ENCODE measurements at regions of chr16 and their contacts with region 1.

Region 1: GRCh38 chr16:30091474-30092372 is at the start of gene TBX6:
- DNase-seq: peak; percentile 95 to 97
- ATAC-seq: peak; percentile 89 to 91 (median 90)
- H3K4me3 ChIP-seq: peak within 1 kb of the TSS; percentile 64
- H3K27ac ChIP-seq: peak within 1 kb of the TSS; percentile 97
- H3K4me1 ChIP-seq: peaks cover 34% of the 10 kb centered on the region
- H3K27me3 ChIP-seq: no peaks in the 10 kb centered on the region
- CTCF ChIP-seq: peak; percentile 78
- total RNA-seq, gene TBX6: 0.32 to 1.0 (median 0.51) TPM

Region 2: DNA sequence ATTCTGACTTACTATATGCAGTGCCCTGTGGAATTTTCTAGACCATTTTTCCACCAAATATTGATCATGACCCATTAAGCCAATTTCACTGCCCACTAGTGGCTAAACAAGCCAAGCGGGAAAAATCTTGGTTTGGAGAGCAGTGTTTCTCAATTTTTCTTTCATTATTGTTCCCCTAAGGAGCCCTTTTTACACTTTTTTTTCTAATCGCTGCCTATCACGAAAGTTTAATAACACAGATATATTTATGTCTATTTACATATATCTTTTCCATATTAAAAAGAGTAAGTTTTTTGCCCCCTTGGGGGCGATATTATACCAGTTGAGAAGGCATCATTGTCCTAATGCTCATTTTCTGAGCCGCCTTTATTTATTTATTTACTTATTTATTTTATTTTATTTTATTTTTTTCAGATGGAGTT is 49.9 kb before region 1 on chr16:
- intact Hi-C with region 1: loop called in 1 of 2 experiments (anchors 5 kb)
- DNase-seq: no peak
- ATAC-seq: peak in 2 of 4 donors; percentile 45 to 75
- H3K4me3 ChIP-seq: no peak overlapping the region
- H3K27ac ChIP-seq: no peak overlapping the region
- H3K4me1 ChIP-seq: no peaks in the 10 kb centered on the region
- H3K27me3 ChIP-seq: no peaks in the 10 kb centered on the region
- CTCF ChIP-seq: peak; percentile 59

Region 3: GRCh38 chr16:30075507-30076275 is 16.0 kb before region 1 on chr16 and contains the start of gene PPP4C:
- intact Hi-C with region 1: loop called in 1 of 2 experiments (anchors 1 kb)
- DNase-seq: peak; percentile 94 to 95
- ATAC-seq: peak; percentile 86 to 89 (median 88)
- H3K4me3 ChIP-seq: peak within 1 kb of the TSS; percentile 76
- H3K27ac ChIP-seq: peak within 1 kb of the TSS; percentile 94
- H3K4me1 ChIP-seq: peaks cover 24% of the 10 kb centered on the region
- H3K27me3 ChIP-seq: no peaks in the 10 kb centered on the region
- CTCF ChIP-seq: no peak
- total RNA-seq, gene PPP4C: 38.1 to 64.5 (median 58.5) TPM

Region 4: GRCh38 chr16:30122604-30123160 is 31.0 kb after region 1 on chr16:
- intact Hi-C with region 1: loop called in 1 of 2 experiments (anchors 2 kb)
- DNase-seq: peak in 1 of 2 donors; percentile 25
- ATAC-seq: peak; percentile 5 to 38 (median 9)
- H3K4me3 ChIP-seq: peak overlapping the region; percentile 86
- H3K27ac ChIP-seq: peak overlapping the region; percentile 97
- H3K4me1 ChIP-seq: peaks cover 19% of the 10 kb centered on the region
- H3K27me3 ChIP-seq: no peaks in the 10 kb centered on the region
- CTCF ChIP-seq: no peak

Region 5: DNA sequence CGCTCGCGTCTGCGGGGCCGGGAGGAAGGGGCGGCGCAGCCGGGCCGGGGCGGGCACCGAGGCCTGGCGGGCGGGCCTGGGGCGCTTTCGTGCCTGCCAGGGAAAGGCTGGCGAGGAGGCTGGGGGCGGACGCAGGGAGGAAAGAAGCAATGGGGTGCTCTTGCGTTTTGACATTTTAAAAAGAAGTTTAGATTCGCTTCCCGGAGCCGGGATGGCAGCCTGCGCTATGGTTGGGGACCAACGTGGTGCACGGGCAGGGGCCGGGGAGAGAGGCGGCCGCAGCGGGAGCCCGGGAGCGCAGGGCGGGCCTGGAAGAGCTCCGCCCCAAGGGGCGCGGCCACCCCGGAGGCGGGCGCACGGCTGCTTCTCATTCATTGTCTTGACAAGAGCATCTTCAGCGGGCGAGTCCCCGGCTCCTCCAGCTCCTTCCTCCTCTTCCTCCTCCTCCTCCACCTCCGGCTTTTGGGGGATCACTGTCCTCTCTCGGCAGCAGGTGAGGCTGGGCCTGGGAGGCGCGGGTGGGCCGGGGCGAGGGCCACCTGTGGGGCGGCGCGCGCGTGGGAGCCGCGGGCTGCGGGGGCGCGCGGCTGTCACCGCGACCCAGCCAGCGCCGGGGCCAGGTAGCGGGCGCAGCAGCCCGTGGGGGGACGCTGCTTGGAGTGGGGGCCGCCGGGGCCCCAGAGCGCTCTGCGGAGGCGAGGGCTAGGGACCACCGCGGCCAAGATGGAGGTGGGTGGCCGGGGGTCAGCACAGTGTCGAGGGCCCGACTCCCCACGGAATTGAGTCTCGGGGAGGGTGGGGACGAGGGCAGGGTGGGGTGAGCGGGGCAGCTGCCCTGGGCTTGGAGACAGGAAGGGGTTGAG is 91.7 kb after region 1 on chr16 and contains the start of gene CORO1A:
- intact Hi-C with region 1: loop called in 1 of 2 experiments (anchors 5 kb)
- DNase-seq: peak; percentile 83 to 90
- ATAC-seq: peak; percentile 75 to 89 (median 82)
- H3K4me3 ChIP-seq: peak within 1 kb of the TSS; percentile 79
- H3K27ac ChIP-seq: peak within 1 kb of the TSS; percentile 41
- H3K4me1 ChIP-seq: peaks cover 4% of the 10 kb centered on the region
- H3K27me3 ChIP-seq: no peaks in the 10 kb centered on the region
- CTCF ChIP-seq: no peak
- total RNA-seq, gene CORO1A: 4.0 to 6.8 (median 6.3) TPM

Region 6: DNA sequence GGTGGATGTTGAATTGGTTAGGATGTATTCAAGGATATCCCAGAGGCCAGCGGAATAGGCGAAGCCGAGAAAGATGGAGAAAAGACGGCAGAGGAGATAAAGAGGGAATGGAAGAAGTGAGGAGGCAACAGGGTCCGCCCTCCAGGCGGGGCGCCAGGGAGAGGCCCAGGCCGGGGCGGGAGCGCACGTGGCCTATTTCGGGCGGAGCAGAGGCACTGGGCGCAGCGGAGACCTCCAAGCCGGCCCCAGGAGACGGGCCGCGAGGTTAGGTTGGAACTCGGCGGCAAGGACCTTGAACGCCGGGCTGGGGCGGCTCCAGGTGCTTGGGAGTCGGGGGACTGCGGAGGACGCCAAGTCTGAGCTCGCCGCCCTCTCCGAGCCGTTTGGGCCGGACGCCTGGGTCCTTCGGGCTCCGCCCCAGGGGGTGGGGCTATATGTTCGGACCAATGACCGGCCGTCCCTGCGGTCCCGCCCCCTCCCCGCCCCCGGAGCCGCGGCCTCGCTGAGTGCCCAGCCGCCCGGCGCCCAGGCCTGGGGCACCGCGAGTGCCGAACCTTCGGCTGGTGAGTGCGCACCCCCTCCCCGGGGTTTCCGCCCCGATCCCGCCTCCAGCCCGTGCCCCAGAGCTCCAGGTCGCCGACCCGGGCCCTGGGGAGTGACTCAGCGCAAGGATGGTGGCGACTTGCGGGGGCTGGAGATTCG is 315.5 kb after region 1 on chr16 and contains the start of gene ZNF771:
- intact Hi-C with region 1: loop called in 1 of 2 experiments (anchors 10 kb)
- DNase-seq: peak; percentile 96 to 97
- ATAC-seq: peak; percentile 94 to 97 (median 94)
- H3K4me3 ChIP-seq: peak within 1 kb of the TSS; percentile 69
- H3K27ac ChIP-seq: peak within 1 kb of the TSS; percentile 83
- H3K4me1 ChIP-seq: peaks cover 21% of the 10 kb centered on the region
- H3K27me3 ChIP-seq: no peaks in the 10 kb centered on the region
- CTCF ChIP-seq: no peak
- total RNA-seq, gene ZNF771: 4.8 to 14.6 (median 9.1) TPM

Region 7: DNA sequence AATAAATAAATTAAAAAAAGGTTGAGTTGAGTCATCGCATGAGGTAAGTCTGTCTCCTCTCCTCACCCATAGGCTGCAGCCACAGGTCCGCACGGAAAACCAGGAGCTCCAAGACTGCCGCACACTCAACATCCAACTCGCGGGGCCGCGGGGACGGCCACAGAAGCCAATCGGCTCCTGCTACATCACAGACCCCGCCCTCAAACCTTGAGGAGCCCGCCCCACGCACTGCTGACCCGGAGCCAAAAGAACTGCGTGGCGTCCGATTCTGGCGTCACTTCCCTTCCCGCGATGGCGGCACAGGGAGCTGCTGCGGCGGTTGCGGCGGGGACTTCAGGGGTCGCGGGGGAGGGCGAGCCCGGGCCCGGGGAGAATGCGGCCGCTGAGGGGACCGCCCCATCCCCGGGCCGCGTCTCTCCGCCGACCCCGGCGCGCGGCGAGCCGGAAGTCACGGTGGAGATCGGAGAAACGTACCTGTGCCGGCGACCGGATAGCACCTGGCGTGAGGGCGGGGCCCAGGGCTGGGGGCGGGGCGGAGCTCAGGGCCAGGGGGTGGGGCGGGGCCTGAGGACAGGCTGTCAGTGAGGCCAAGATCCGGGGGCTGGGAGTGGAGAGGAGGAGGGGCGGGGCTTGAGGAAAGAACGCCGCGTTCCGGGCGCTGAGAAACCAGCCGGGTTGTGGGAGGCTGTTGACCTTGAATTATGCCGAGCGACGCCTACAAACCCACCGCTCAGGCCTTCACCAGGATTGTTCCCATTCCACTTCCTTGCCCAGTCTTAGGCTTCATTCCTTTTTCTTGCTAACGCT is 1025.9 kb after region 1 on chr16 and contains the start of gene KAT8:
- intact Hi-C with region 1: no loop called
- DNase-seq: peak; percentile 98 to 99
- ATAC-seq: peak; percentile 91 to 97 (median 92)
- H3K4me3 ChIP-seq: peak within 1 kb of the TSS; percentile 76
- H3K27ac ChIP-seq: peak within 1 kb of the TSS; percentile 99
- H3K4me1 ChIP-seq: peaks cover 21% of the 10 kb centered on the region
- H3K27me3 ChIP-seq: no peaks in the 10 kb centered on the region
- CTCF ChIP-seq: no peak
- total RNA-seq, gene KAT8: 39.9 to 75.4 (median 61.2) TPM